B cell (primary cell): ENCODE measurements at regions of chr1 and their contacts with region 1.

Region 1: DNA sequence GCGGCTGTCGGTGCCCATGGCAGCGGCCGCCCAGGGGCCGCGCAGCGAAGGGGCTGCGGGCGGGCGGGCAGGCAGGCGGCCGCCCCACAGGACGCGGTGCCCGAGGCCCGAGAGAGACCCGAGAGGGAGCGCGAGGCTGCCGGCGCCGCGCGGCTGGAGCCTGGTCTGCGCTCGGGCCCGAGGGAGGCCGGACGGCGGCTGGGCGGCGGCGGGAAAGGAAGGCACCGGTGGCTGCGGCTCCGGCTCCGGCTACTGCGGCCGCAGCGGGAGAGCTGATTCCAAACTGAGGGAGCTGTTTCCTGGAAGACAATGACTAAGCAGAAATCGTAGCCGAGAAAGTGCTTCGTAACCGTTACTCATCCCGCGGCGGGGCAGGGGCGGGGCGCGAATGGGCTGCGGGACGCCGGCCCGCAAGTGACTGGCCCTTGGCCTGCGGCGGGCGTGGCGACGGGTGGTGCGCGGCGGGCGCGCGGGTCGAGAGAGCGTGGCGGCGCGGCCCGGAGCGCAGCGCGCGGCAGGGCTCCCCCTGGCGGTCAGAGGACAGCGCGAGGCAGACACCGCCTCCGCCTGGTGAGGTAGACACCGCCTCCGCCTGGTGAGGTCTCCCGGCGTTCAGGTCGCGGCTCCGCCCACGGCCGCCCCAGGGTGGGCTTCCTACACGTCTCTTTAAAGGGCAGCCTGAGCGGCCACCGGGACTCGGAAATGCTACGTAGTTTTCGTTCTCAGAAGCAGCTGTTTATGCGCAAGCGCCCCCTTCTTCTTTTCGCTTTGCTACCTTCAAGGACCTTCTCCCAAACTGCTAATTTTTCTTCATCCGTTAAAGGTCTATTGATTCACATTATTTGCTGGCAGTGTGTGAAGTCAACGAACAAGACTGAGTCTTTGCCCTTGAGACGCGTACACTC is at the start of gene GCLM:
- DNase-seq: peak; percentile 94
- ATAC-seq: peak; percentile 93
- H3K4me3 ChIP-seq: peak within 1 kb of the TSS; percentile 60 to 98 (median 71)
- H3K4me3 Mint-ChIP-seq: peak within 1 kb of the TSS; percentile 89
- H3K27ac ChIP-seq: peak within 1 kb of the TSS; percentile 67 to 81
- H3K27ac Mint-ChIP-seq: peak within 1 kb of the TSS; percentile 84
- H3K4me1 ChIP-seq: peaks cover 17 to 21% of the 10 kb centered on the region in 2 donors
- H3K4me1 Mint-ChIP-seq: peaks cover 25% of the 10 kb centered on the region
- H3K27me3 ChIP-seq: no peaks in the 10 kb centered on the region
- H3K27me3 Mint-ChIP-seq: peaks cover 6% of the 10 kb centered on the region
- CTCF ChIP-seq: peak; percentile 94
- total RNA-seq, gene GCLM: 10.7 and 12.4 TPM in 2 replicates

Region 2: DNA sequence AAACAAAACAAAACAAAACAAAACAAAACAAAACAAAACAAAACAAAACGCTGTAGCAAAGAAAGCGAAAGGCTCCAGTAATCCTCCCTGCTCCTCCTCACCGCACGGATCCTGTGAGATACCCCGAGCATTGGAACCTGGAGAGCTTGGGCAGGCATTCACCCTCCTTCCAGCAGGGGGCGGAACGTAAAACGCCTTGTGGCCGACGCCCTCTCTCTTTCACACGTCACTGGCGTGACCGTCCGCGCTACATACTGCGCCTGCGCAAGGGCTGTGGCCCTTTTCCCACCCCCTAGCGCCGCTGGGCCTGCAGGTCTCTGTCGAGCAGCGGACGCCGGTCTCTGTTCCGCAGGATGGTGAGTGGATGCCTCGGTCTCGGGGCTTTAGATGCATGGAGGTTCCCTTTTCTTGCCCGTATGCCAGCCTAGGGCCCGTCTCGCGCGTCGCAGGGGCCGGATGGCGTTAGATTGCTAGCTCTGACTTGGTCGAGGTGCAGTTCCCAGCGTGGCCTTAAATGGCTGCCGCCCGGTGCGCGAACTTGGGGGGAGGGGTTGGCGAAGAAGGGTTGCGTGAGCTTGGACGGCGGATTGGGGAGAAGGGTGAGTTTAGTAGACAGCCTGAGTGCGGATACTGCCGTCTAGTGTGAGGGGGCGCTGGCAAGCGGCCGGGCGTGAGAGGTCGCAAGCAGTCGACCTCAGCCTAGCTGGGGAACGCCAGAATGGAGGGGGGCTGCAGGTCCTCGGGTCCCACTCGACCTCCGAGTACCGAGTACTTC is 1077.4 kb before region 1 on chr1 and contains the start of gene RPL5:
- CTCF ChIA-PET with region 1: no interaction called
- POLR2A ChIA-PET with region 1: no interaction called
- intact Hi-C with region 1: loop called (anchors 10 kb)
- DNase-seq: peak; percentile 100
- ATAC-seq: peak; percentile 88
- H3K4me3 ChIP-seq: peak within 1 kb of the TSS; percentile 84 to 98 (median 92)
- H3K4me3 Mint-ChIP-seq: peak within 1 kb of the TSS; percentile 100
- H3K27ac ChIP-seq: peak within 1 kb of the TSS; percentile 90 to 96
- H3K27ac Mint-ChIP-seq: peak within 1 kb of the TSS; percentile 100
- H3K4me1 ChIP-seq: peaks cover 25 to 28% of the 10 kb centered on the region in 2 donors
- H3K4me1 Mint-ChIP-seq: peaks cover 47% of the 10 kb centered on the region
- H3K27me3 ChIP-seq: no peaks in the 10 kb centered on the region
- H3K27me3 Mint-ChIP-seq: no peaks in the 10 kb centered on the region
- CTCF ChIP-seq: peak; percentile 89
- total RNA-seq, gene RPL5: 1,049 and 1,104 TPM in 2 replicates

Region 3: GRCh38 chr1:93708734-93709481 is 200.5 kb before region 1 on chr1:
- CTCF ChIA-PET with region 1: no interaction called
- POLR2A ChIA-PET with region 1: no interaction called
- intact Hi-C with region 1: loop called (anchors 10 kb)
- DNase-seq: no peak
- ATAC-seq: no peak
- H3K4me3 ChIP-seq: no peak overlapping the region
- H3K4me3 Mint-ChIP-seq: peak overlapping the region; percentile 40
- H3K27ac ChIP-seq: peak overlapping the region; percentile 41 to 58
- H3K27ac Mint-ChIP-seq: peak overlapping the region; percentile 42
- H3K4me1 ChIP-seq: peaks cover 49 to 63% of the 10 kb centered on the region in 2 donors
- H3K4me1 Mint-ChIP-seq: peaks cover 54% of the 10 kb centered on the region
- H3K27me3 ChIP-seq: no peaks in the 10 kb centered on the region
- H3K27me3 Mint-ChIP-seq: no peaks in the 10 kb centered on the region
- CTCF ChIP-seq: no peak

Region 4: DNA sequence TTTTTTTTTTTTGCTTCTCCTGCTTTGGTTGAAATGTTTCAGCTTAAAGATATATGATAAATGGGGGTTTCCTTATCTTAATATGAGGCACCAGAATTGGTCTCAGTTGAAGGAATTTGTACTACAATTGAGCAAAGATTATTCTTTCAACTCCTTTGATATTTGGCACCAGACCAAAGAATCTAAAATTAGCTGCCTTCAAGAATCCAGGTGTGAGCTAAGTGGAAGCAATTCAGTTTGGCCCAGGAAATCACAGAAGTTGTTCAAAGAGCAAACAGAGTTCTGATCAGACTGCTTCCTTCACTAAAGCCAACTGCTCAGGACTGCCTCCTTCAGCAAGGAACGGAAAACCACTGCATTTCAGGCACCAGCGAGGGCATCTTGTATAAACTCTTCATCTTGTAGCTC is 159.5 kb before region 1 on chr1:
- CTCF ChIA-PET with region 1: no interaction called
- POLR2A ChIA-PET with region 1: no interaction called
- intact Hi-C with region 1: loop called (anchors 5 kb)
- DNase-seq: peak; percentile 82
- ATAC-seq: peak; percentile 48
- H3K4me3 ChIP-seq: peak overlapping the region in 2 of 5 experiments; percentile 5 to 40
- H3K4me3 Mint-ChIP-seq: peak overlapping the region; percentile 73
- H3K27ac ChIP-seq: peak overlapping the region; percentile 86 to 87
- H3K27ac Mint-ChIP-seq: peak overlapping the region; percentile 93
- H3K4me1 ChIP-seq: peaks cover 34 to 41% of the 10 kb centered on the region in 2 donors
- H3K4me1 Mint-ChIP-seq: peaks cover 55% of the 10 kb centered on the region
- H3K27me3 ChIP-seq: no peaks in the 10 kb centered on the region
- H3K27me3 Mint-ChIP-seq: no peaks in the 10 kb centered on the region
- CTCF ChIP-seq: peak; percentile 56

Region 5: GRCh38 chr1:93878889-93879586 is 30.4 kb before region 1 on chr1 and contains the start of gene DNTTIP2:
- CTCF ChIA-PET with region 1: interaction called, 16 read pairs
- POLR2A ChIA-PET with region 1: interaction called, 6 read pairs
- intact Hi-C with region 1: loop called (anchors 1 kb)
- DNase-seq: peak; percentile 91
- ATAC-seq: peak; percentile 89
- H3K4me3 ChIP-seq: peak within 1 kb of the TSS; percentile 82 to 99 (median 96)
- H3K4me3 Mint-ChIP-seq: peak within 1 kb of the TSS; percentile 98
- H3K27ac ChIP-seq: peak within 1 kb of the TSS; percentile 89 to 94
- H3K27ac Mint-ChIP-seq: peak within 1 kb of the TSS; percentile 100
- H3K4me1 ChIP-seq: peaks cover 26 to 30% of the 10 kb centered on the region in 2 donors
- H3K4me1 Mint-ChIP-seq: peaks cover 42% of the 10 kb centered on the region
- H3K27me3 ChIP-seq: no peaks in the 10 kb centered on the region
- H3K27me3 Mint-ChIP-seq: no peaks in the 10 kb centered on the region
- CTCF ChIP-seq: no peak
- total RNA-seq, gene DNTTIP2: 58.3 and 62.1 TPM in 2 replicates

Region 6: DNA sequence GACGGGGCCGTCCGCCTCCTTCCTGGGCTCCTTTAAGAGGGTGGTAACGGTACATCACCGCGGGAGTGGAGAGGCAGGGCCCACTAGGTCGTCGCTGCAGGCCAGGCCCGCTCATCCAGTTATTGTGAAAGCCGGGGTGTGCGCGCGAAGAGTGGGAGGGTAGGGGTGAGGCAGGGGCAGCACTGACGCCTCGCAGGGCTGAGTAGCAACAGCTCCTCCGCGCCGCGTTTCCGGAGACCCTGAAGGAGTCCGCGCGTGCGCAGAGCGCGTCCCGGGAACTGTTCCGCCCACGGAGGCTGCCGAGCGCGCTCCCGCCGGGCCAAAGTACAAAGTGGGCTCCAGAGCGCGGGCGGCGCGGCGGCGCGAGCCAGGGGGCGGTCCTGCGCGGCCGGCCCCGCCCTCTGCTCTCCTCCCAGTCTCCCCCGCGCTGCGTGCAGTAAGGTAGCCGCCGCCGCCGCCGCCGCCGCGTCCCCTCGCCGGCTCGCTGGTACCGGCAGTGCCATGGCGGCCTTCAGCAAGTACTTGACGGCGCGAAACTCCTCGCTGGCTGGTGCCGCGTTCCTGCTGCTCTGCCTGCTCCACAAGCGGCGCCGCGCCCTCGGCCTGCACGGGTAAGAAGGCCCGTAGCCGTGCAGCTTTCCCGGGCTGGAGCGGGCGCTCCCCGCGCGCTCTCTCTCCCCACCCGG is 508.7 kb after region 1 on chr1 and contains the start of gene ABCD3:
- CTCF ChIA-PET with region 1: no interaction called
- POLR2A ChIA-PET with region 1: no interaction called
- intact Hi-C with region 1: loop called (anchors 1 kb)
- DNase-seq: peak; percentile 98
- ATAC-seq: peak; percentile 95
- H3K4me3 ChIP-seq: peak within 1 kb of the TSS; percentile 67 to 89 (median 85)
- H3K4me3 Mint-ChIP-seq: no peak within 1 kb of the TSS
- H3K27ac ChIP-seq: peak within 1 kb of the TSS; percentile 73 to 80
- H3K27ac Mint-ChIP-seq: peak within 1 kb of the TSS; percentile 77
- H3K4me1 ChIP-seq: peaks cover 12 to 15% of the 10 kb centered on the region in 2 donors
- H3K4me1 Mint-ChIP-seq: peaks cover 22% of the 10 kb centered on the region
- H3K27me3 ChIP-seq: peaks cover 0 to 5% (median 2%) of the 10 kb centered on the region in 4 experiments
- H3K27me3 Mint-ChIP-seq: peaks cover 7% of the 10 kb centered on the region
- CTCF ChIP-seq: no peak
- total RNA-seq, gene ABCD3: 19.4 and 21.0 TPM in 2 replicates